HAP-1 (cell line): ENCODE measurements at regions of chr17 and their contacts with region 1.

Region 1: DNA sequence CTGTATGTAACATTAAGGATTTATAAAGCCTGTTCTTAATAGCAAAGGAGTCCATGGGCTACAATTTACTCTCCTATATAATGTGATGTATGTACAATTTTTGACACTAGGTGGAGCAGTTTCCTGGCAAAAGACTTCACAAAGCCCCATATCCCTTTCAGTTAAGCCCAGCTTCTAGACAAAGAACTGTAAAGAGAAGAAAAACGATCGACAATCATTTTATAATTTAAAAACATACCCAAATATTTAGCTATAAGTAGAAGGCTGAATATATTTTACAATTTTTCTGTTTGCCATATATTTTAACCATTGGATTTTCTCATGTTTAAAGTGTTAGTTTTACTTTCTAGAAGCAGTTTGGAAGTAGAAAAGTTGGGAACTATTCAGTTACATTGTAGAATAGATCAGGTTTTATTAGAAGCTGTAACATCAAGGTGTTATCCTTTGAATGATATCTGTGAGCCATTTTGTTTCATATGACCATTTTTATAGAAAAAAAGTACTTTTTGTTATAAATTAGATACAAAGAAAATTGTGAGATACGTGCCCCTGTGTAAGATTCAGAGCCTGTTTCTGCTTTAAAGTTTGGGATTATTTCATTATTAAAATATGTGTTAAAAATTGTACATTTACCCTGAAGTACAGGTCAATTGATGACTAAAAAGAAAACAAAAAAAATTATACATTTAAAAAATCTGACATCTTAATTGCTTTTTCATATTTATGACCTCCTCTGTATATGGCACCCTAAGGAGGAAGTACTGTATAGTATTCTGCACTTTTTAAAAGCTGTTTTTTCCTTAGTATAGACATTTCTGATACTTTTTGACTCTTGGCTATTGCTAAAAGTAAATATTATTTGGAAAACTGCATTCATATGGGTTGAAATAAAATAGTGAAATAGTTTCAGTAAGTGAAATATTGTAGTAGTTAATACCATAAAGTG is 46.3 kb downstream of the VMP1 start:
- DNase-seq: peak; percentile 41 to 86
- H3K4me3 ChIP-seq: no peak overlapping the region
- H3K4me1 ChIP-seq: peaks cover 17% of the 10 kb centered on the region
- H3K27me3 ChIP-seq: no peaks in the 10 kb centered on the region

Region 2: GRCh38 chr17:59846394-59847165 is 92.8 kb after region 1 on chr17:
- in situ Hi-C with region 1: loop called (anchors 5 kb)
- DNase-seq: no peak
- H3K4me3 ChIP-seq: no peak overlapping the region
- H3K4me1 ChIP-seq: peaks cover 37% of the 10 kb centered on the region
- H3K27me3 ChIP-seq: no peaks in the 10 kb centered on the region

Region 3: DNA sequence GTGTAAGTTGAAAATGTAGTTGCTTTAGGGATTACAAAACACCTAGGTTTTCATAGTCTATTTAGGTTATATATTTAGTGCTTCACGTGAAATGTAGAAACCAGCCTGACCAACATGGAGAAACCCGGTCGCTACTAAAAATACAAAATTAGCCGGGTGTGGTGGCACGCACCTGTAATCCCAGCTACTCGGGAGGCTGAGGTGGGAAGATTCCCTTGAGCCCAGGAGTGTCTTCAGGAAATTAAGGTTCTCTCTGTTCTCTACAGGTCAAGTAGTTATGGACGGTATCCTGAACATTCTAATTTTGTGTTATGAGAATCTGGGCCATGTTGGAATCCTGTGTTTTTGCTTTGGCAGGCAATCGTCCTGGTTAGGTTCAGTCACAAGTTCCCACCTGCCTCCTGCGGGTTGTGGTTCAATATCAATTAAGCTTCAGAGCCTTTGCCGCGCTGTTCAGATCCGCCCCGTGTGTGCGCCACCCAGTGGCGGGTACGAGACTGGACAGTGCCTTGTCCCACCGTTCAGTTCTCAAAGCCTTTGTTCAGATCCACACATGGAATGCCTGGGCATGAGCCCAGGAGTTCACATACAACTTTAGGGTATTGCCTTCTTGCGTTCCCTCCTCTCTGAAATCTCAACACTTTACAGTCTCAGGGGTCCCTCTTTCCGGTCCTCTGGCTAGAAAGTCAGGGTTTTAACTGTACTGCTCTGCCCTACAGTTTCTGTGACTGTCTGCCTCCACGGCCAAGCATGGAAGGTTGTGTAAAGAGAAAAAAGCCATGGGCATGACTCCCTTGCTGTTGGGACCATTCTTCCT is 283.2 kb after region 1 on chr17:
- in situ Hi-C with region 1: loop called (anchors 10 kb)
- DNase-seq: peak; percentile 85
- H3K4me3 ChIP-seq: no peak overlapping the region
- H3K4me1 ChIP-seq: no peaks in the 10 kb centered on the region
- H3K27me3 ChIP-seq: peaks cover 3% of the 10 kb centered on the region; the same call in 1 of the 2 replicates

Region 4: GRCh38 chr17:60224064-60224463 is 470.3 kb after region 1 on chr17:
- in situ Hi-C with region 1: no loop called
- DNase-seq: peak; percentile 52 to 85
- H3K4me3 ChIP-seq: no peak overlapping the region
- H3K4me1 ChIP-seq: peaks cover 19% of the 10 kb centered on the region
- H3K27me3 ChIP-seq: no peaks in the 10 kb centered on the region